ENCODE measurements at regions of chr4 and their contacts with region 1.

Region 1: DNA sequence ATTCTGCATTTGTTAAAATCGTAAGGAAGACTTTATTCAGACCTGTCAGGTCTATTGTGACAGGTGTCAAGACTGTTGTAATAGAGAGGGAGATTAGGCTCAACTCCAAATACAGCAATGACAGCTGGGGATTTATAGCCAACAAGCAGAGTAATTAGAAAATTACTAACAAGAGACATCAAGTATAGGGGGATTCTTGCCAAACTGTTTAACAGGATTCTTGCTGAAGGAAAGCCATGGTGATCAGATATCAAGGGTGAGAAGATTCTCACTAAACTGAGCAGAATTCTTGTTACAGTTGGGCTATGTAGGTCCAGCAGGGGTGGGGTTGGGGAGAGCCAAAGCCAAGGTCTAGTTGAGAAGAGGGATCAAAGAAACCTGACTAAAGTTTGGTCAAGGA is 461.0 kb upstream of the GALNT7 start:
- DNase-seq: no peak
- H3K4me3 ChIP-seq: no peak overlapping the region
- H3K27ac ChIP-seq: no peak overlapping the region
- H3K4me1 ChIP-seq: no peaks in the 10 kb centered on the region
- H3K27me3 ChIP-seq: no peaks in the 10 kb centered on the region
- CTCF ChIP-seq: no peak

Region 2: GRCh38 chr4:171256223-171256622 is 1451.4 kb before region 1 on chr4:
- CTCF ChIA-PET with region 1: interaction called, 19 read pairs
- dilution Hi-C with region 1: no loop called
- in situ Hi-C with region 1: no loop called
- intact Hi-C with region 1: no loop called
- DNase-seq: no peak
- H3K4me3 ChIP-seq: no peak overlapping the region
- H3K27ac ChIP-seq: no peak overlapping the region
- H3K4me1 ChIP-seq: no peaks in the 10 kb centered on the region
- H3K27me3 ChIP-seq: no peaks in the 10 kb centered on the region
- CTCF ChIP-seq: no peak

Region 3: DNA sequence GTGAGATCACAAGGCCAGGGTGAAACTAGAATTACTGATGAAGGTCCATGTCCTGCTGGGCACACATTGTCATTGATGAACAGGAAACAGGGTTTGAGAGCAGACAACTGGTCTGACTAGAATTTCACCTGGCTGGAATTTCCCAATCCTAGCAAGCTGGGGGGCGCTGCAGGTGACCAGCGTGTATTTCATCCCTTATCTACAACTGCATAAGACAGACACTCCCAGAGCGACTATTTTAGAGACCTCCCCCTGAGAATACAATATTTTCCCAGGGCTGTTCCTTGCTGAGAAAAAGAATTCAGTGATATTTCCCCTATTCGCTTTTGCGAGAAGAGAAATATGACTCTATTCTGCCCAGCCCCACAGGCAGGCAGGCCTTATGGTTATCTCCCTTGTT is 28.4 kb after region 1 on chr4:
- CTCF ChIA-PET with region 1: no interaction called
- dilution Hi-C with region 1: no loop called
- in situ Hi-C with region 1: no loop called
- intact Hi-C with region 1: no loop called
- DNase-seq: no peak
- H3K4me3 ChIP-seq: no peak overlapping the region
- H3K27ac ChIP-seq: no peak overlapping the region
- H3K4me1 ChIP-seq: no peaks in the 10 kb centered on the region
- H3K27me3 ChIP-seq: no peaks in the 10 kb centered on the region
- CTCF ChIP-seq: no peak